CD4-positive, alpha-beta memory T cell (primary cell): ENCODE measurements at regions of chr15 and their contacts with region 1.

Region 1: DNA sequence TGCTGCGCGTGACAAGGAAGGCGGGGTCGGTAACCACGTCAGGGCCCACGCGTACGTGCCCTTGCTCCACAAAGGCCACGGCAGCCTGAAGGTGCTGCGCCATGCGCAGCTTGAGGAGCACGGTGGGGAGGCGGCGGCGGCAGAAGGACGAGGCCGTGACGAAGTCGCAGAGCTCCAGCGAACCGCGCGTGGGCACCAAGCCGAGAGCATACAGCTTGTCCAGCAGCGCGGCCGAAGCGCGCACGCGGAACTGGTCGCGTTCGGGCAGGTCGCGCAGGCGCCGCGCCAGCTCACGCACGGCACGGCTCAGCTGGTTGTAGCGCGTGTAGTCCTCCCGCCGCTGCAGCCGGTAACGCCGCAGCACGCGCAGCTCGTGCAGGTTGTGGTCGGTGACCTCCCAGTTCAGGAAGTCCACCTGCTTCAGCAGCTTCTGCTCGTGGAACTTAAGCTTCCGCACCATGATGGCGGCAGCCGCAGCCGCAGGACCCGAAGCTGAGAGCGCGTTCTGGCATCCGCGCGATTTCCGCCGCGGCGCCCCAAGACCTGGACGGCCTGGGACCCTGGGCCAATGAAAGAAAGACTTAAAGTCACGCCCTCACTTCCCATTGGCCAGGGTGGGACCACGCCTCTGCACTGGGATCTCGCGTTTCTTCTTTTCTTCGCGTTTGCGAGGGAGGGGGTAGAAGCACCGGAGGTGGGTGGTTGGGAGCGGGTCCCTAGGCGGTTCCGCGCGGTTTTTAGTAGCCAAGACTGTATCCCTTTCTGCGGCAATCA is at the start of gene IMP3:
- DNase-seq: peak; percentile 92 to 96 (median 94)
- H3K4me3 ChIP-seq: peak within 1 kb of the TSS; percentile 77 to 96
- H3K4me3 Mint-ChIP-seq: peak within 1 kb of the TSS; percentile 87 to 98 (median 94)
- H3K27ac ChIP-seq: peak within 1 kb of the TSS; percentile 81
- H3K27ac Mint-ChIP-seq: peak within 1 kb of the TSS; percentile 79 to 98 (median 96)
- H3K4me1 ChIP-seq: peaks cover 40% of the 10 kb centered on the region
- H3K4me1 Mint-ChIP-seq: peaks cover 30 to 61% (median 39%) of the 10 kb centered on the region in 4 donors
- H3K27me3 ChIP-seq: no peaks in the 10 kb centered on the region
- H3K27me3 Mint-ChIP-seq: no peaks in the 10 kb centered on the region
- total RNA-seq, gene IMP3: 85.5 to 96.9 TPM

Region 2: DNA sequence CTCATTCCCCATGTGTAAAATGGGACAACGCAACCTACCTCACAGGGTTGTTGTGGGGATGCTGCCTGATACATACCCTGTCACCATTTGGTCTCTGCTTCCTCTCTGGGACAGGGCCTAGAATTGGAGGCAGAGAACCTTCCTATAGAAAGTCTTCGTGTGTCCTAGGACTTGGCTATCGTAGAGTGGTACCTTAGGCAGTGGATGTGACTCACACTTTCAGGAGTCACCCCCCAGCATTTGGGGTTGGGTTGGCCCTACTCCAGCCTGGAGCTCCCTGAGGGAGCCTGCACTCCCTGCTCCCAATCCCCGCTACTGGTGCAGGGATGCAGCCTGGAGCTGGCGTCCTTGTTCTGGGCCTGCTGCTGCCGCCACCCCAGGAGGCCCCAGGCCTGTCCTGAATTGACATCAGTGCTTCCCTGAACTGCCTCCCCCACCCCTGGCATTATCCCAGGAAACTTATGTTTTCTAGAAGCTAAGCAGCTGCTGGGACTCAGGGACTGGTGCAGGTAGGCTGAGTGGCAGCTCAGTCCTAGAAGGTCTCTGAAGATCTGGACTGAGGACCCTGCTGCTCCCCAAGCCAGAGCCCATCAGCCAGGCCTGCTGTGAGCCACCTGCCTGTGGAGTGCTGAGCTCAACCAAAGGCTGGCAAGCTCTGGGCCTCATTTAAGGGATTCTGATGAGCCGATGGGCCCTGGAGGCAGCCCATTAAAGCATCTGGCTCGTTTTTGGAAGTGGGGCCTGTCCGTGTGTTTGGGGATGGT is 428.3 kb before region 1 on chr15:
- CTCF ChIA-PET with region 1: no interaction called
- POLR2A ChIA-PET with region 1: no interaction called
- intact Hi-C with region 1: no loop called
- DNase-seq: no peak
- H3K4me3 ChIP-seq: no peak overlapping the region
- H3K4me3 Mint-ChIP-seq: no peak overlapping the region
- H3K27ac ChIP-seq: no peak overlapping the region
- H3K27ac Mint-ChIP-seq: peak overlapping the region in 1 of 7 donors; percentile 17
- H3K4me1 ChIP-seq: peaks cover 11% of the 10 kb centered on the region
- H3K4me1 Mint-ChIP-seq: peaks cover 8 to 29% (median 16%) of the 10 kb centered on the region in 4 donors
- H3K27me3 ChIP-seq: no peaks in the 10 kb centered on the region
- H3K27me3 Mint-ChIP-seq: no peaks in the 10 kb centered on the region

Region 3: DNA sequence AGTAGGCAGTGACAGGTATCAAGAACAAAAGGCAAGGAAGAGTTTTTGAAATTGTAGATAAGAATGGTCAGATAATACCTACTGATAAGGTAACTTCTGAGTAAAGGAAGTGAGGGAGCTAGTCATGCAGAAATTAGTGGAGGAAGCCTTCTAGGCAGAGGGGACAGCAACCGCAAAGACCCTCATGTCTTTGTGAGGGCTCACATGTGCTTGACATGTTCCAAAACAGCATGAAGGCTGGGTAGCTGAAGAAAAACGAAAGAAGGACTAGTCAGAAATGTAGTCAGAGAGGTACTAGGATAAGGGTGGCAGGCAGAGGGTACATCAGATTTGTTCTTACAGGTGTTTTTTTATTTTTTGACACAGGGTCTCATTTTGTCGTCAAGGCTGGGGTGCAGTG is 193.7 kb before region 1 on chr15:
- CTCF ChIA-PET with region 1: interaction called, 8 read pairs
- POLR2A ChIA-PET with region 1: interaction called, 181 read pairs
- intact Hi-C with region 1: loop called (anchors 1 kb)
- DNase-seq: peak in 4 of 5 donors; percentile 15 to 48 (median 22)
- H3K4me3 ChIP-seq: no peak overlapping the region
- H3K4me3 Mint-ChIP-seq: peak overlapping the region; percentile 10 to 83 (median 58)
- H3K27ac ChIP-seq: no peak overlapping the region
- H3K27ac Mint-ChIP-seq: peak overlapping the region; percentile 1 to 76 (median 46)
- H3K4me1 ChIP-seq: peaks cover 78% of the 10 kb centered on the region
- H3K4me1 Mint-ChIP-seq: peaks cover 36 to 67% (median 56%) of the 10 kb centered on the region in 4 donors
- H3K27me3 ChIP-seq: no peaks in the 10 kb centered on the region
- H3K27me3 Mint-ChIP-seq: no peaks in the 10 kb centered on the region

Region 4: GRCh38 chr15:75508840-75509532 is 130.9 kb before region 1 on chr15:
- CTCF ChIA-PET with region 1: interaction called, 41 read pairs
- POLR2A ChIA-PET with region 1: interaction called, 20 read pairs
- intact Hi-C with region 1: loop called (anchors 1 kb)
- DNase-seq: peak in 4 of 5 donors; percentile 40 to 49 (median 44)
- H3K4me3 ChIP-seq: no peak overlapping the region
- H3K4me3 Mint-ChIP-seq: no peak overlapping the region
- H3K27ac ChIP-seq: no peak overlapping the region
- H3K27ac Mint-ChIP-seq: peak overlapping the region in 2 of 7 donors; percentile 50 to 78
- H3K4me1 ChIP-seq: no peaks in the 10 kb centered on the region
- H3K4me1 Mint-ChIP-seq: peaks cover 0 to 3% (median 0%) of the 10 kb centered on the region in 4 donors
- H3K27me3 ChIP-seq: no peaks in the 10 kb centered on the region
- H3K27me3 Mint-ChIP-seq: no peaks in the 10 kb centered on the region

Region 5: DNA sequence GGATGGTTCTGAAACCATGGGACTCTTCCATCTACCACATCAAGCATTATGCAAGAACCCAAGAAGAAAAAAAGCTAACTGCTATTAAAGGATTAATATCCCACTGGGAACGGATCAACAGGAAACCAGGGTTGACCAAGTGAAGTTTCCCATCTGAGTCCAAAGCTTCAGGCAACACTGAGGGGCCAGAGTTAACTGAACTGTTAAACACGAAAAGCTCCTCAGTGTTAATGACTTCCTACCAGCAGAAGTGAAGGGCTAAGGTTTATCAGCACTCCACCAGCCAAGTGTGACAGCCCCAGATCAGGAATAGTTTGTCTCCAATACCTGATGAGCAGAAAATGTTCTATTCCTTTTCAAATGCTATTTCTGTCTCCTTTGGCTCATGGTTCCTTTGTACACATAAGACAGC is 97.5 kb before region 1 on chr15:
- CTCF ChIA-PET with region 1: no interaction called
- POLR2A ChIA-PET with region 1: no interaction called
- intact Hi-C with region 1: no loop called
- DNase-seq: no peak
- H3K4me3 ChIP-seq: no peak overlapping the region
- H3K4me3 Mint-ChIP-seq: no peak overlapping the region
- H3K27ac ChIP-seq: no peak overlapping the region
- H3K27ac Mint-ChIP-seq: peak overlapping the region in 3 of 7 donors; percentile 5 to 13 (median 13)
- H3K4me1 ChIP-seq: peaks cover 14% of the 10 kb centered on the region
- H3K4me1 Mint-ChIP-seq: peaks cover 17 to 44% (median 28%) of the 10 kb centered on the region in 4 donors
- H3K27me3 ChIP-seq: no peaks in the 10 kb centered on the region
- H3K27me3 Mint-ChIP-seq: no peaks in the 10 kb centered on the region

Region 6: DNA sequence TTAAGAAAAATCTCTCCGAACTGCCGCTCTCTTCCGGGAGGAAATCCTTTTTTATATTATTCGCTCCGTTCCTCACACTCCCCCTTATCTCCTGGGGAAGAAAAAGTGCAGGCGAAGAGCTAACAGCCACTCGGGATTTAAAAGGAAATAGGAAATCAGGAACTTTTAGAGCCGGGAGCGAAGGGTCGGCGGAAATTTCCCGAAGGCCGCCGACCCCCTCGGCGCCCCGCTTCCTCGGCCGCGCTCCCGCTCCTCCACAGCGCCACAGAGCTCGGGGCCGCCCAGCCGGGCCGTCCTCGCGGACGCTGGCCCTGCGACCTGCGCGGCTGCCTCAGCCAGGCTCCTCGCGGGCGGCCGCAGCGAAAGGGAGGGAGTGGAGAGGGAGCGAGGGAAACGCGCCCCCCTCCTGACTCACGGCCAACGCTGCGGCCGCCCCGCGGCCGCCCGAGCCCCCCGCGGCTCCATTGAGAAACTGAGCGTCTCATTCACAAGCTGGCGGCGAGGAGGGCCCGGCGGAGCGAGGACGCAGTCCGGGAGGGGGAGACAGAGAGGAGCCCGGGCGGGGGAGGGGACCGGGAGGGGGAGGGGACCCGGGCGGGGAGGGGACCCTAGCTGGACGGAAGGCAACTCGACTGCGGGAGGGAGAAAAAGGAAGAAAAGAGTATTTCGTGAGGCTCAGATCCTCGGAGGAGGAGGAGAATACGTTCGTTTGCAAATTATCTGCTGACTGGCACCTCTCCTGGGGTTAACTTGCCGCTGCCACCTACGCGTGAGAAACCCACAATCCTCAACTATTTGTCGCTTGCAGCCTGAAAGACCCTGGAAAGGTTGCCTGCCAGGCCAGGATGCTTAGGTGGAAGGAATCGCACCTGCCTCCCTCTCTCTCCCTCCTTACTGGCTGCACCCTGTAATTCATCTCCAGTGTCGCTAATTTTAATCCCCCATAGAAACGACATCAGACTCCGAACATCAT is 60.7 kb before region 1 on chr15 and contains the start of gene PTPN9:
- CTCF ChIA-PET with region 1: interaction called, 9 read pairs
- POLR2A ChIA-PET with region 1: interaction called, 56 read pairs
- intact Hi-C with region 1: loop called (anchors 1 kb)
- DNase-seq: peak; percentile 52 to 73 (median 63)
- H3K4me3 ChIP-seq: peak within 1 kb of the TSS; percentile 61 to 74
- H3K4me3 Mint-ChIP-seq: peak within 1 kb of the TSS; percentile 93 to 97 (median 94)
- H3K27ac ChIP-seq: peak within 1 kb of the TSS; percentile 77
- H3K27ac Mint-ChIP-seq: peak within 1 kb of the TSS; percentile 90 to 95 (median 94)
- H3K4me1 ChIP-seq: peaks cover 22% of the 10 kb centered on the region
- H3K4me1 Mint-ChIP-seq: peaks cover 18 to 26% (median 21%) of the 10 kb centered on the region in 4 donors
- H3K27me3 ChIP-seq: no peaks in the 10 kb centered on the region
- H3K27me3 Mint-ChIP-seq: no peaks in the 10 kb centered on the region
- total RNA-seq, gene PTPN9: 15.9 to 16.6 TPM

Region 7: DNA sequence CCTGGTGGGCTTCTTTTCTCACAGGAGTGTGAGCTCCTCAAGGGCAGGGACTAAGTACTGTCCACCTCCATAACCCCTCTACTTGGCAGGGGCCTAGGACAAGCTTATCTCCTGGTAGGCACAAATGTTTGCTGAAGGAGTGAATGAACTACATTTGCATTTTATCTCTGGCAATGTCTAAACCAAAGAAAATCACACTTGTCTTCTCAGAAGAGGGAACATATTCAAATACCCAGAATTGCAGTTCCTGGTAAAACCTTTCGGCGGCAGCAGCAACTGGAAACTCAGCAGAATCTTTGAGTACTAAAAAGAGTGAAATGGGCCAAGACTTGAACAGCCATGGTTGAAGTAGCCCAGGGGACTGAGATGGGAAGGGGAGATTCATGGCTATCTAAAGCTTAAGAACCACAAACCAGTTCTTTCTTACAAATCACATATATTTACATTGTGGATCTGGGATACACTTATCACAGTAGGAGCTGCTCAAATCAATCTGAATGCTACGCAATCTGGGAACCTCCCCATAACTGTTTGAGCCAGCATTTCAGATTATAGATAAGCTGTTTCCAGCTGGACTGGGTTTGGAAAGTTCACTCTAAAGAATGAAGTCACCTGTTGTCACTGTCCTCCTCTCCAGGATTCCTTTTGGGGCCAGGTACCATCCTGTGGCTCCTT is 42.1 kb before region 1 on chr15:
- CTCF ChIA-PET with region 1: interaction called, 31 read pairs
- POLR2A ChIA-PET with region 1: interaction called, 28 read pairs
- intact Hi-C with region 1: loop called (anchors 2 kb)
- DNase-seq: peak; percentile 19 to 50 (median 33)
- H3K4me3 ChIP-seq: no peak overlapping the region
- H3K4me3 Mint-ChIP-seq: peak overlapping the region in 6 of 8 donors; percentile 1 to 68 (median 36)
- H3K27ac ChIP-seq: no peak overlapping the region
- H3K27ac Mint-ChIP-seq: peak overlapping the region in 6 of 7 donors; percentile 15 to 93 (median 59)
- H3K4me1 ChIP-seq: peaks cover 25% of the 10 kb centered on the region
- H3K4me1 Mint-ChIP-seq: peaks cover 16 to 26% (median 21%) of the 10 kb centered on the region in 4 donors
- H3K27me3 ChIP-seq: no peaks in the 10 kb centered on the region
- H3K27me3 Mint-ChIP-seq: no peaks in the 10 kb centered on the region

Region 8: GRCh38 chr15:75606711-75607699 is 32.9 kb before region 1 on chr15:
- CTCF ChIA-PET with region 1: interaction called, 9 read pairs
- POLR2A ChIA-PET with region 1: interaction called, 56 read pairs
- intact Hi-C with region 1: loop called (anchors 2 kb)
- DNase-seq: peak; percentile 43 to 57 (median 52)
- H3K4me3 ChIP-seq: peak overlapping the region; percentile 5 to 40
- H3K4me3 Mint-ChIP-seq: peak overlapping the region; percentile 71 to 82 (median 78)
- H3K27ac ChIP-seq: peak overlapping the region; percentile 39
- H3K27ac Mint-ChIP-seq: peak overlapping the region; percentile 78 to 94 (median 91)
- H3K4me1 ChIP-seq: peaks cover 47% of the 10 kb centered on the region
- H3K4me1 Mint-ChIP-seq: peaks cover 34 to 56% (median 46%) of the 10 kb centered on the region in 4 donors
- H3K27me3 ChIP-seq: no peaks in the 10 kb centered on the region
- H3K27me3 Mint-ChIP-seq: no peaks in the 10 kb centered on the region

Region 9: GRCh38 chr15:75625542-75626347 is 14.2 kb before region 1 on chr15 and contains the start of gene SNUPN:
- CTCF ChIA-PET with region 1: interaction called, 35 read pairs
- POLR2A ChIA-PET with region 1: interaction called, 209 read pairs
- intact Hi-C with region 1: loop called (anchors 1 kb)
- DNase-seq: peak; percentile 88 to 94 (median 89)
- H3K4me3 ChIP-seq: peak within 1 kb of the TSS; percentile 94 to 99
- H3K4me3 Mint-ChIP-seq: peak within 1 kb of the TSS; percentile 91 to 97 (median 94)
- H3K27ac ChIP-seq: peak within 1 kb of the TSS; percentile 97
- H3K27ac Mint-ChIP-seq: peak within 1 kb of the TSS; percentile 96 to 99 (median 98)
- H3K4me1 ChIP-seq: peaks cover 22% of the 10 kb centered on the region
- H3K4me1 Mint-ChIP-seq: peaks cover 14 to 35% (median 24%) of the 10 kb centered on the region in 4 donors
- H3K27me3 ChIP-seq: no peaks in the 10 kb centered on the region
- H3K27me3 Mint-ChIP-seq: no peaks in the 10 kb centered on the region
- total RNA-seq, gene SNUPN: 21.0 to 23.5 TPM

Region 10: DNA sequence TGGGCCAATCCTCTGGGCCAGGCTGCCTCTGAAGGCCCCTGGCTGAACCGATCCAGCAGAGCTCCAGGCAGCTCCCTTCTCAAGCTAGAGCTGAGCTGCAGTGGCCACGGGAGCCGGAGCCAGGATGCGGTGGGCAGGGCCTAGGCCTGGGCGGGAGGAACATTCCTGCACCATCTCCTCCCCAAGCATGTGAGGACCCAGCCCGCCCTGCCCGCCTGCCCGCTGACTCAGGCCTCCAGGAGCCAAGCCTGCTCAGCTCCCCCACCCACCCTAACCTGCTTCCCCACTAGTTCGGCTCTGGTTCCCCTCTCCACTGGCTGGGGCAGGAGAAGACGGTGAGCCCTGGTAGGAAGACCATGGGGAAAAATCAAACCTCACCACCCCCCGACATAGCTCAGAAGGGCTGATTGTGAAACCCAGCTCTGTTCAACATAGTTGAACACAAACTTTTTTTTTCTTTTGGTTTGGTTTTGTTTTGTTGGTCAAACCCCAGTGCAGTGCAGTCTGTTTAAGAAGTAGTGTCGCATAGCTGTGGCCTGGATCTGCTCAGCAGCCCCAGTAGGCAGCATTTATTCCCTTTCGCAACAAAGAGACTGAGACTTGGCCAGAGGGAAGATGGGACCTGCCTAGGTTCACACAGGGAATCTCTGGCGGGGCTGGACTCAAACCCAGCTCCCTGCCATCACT is 21.3 kb after region 1 on chr15:
- CTCF ChIA-PET with region 1: no interaction called
- POLR2A ChIA-PET with region 1: no interaction called
- intact Hi-C with region 1: no loop called
- DNase-seq: no peak
- H3K4me3 ChIP-seq: no peak overlapping the region
- H3K4me3 Mint-ChIP-seq: no peak overlapping the region
- H3K27ac ChIP-seq: no peak overlapping the region
- H3K27ac Mint-ChIP-seq: no peak overlapping the region
- H3K4me1 ChIP-seq: no peaks in the 10 kb centered on the region
- H3K4me1 Mint-ChIP-seq: peaks cover 0 to 2% (median under 1%) of the 10 kb centered on the region in 4 donors
- H3K27me3 ChIP-seq: no peaks in the 10 kb centered on the region
- H3K27me3 Mint-ChIP-seq: no peaks in the 10 kb centered on the region

Region 11: DNA sequence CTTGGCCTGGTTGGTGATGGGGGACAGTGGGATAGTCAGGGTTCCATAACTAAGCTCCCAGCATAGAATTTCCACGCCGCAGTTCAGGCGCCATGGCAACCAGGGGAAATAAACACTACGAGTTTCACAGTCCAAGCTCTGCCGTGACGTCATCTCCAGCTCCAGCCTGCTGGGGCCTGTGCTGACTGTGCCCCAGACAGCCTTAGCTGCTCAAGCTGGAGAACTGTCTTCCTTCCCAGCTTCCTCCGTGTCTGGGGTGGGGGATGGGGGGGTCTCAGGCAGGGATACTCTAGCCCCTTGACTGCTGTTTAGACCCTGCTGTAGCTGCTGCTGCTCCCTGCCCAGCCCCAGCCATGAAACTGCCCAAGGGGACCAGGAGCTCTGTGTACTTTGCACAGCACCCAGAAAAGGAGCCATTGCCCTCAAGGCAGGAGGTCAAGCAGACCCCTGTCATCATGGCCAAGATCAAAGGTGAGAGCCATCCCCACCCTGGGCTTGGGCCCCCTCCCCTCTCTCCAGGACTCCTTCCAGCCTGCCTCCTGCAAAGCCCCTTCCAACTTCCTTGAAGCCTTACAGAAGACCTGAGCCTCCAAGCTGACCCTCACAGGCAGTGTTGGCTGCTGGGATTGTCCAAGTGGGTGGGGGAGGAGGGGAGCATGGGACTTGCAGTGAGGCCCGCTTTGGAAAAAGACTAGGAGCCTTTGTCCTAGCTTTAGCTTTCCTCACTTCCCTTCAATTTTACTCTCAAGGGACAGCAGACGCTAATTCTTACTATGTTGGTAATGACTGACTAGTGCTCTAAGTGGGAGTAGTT is 84.2 kb after region 1 on chr15:
- CTCF ChIA-PET with region 1: no interaction called
- POLR2A ChIA-PET with region 1: no interaction called
- intact Hi-C with region 1: no loop called
- DNase-seq: peak; percentile 16 to 69 (median 25)
- H3K4me3 ChIP-seq: no peak overlapping the region
- H3K4me3 Mint-ChIP-seq: no peak overlapping the region
- H3K27ac ChIP-seq: no peak overlapping the region
- H3K27ac Mint-ChIP-seq: peak overlapping the region in 4 of 7 donors; percentile 16 to 83 (median 56)
- H3K4me1 ChIP-seq: no peaks in the 10 kb centered on the region
- H3K4me1 Mint-ChIP-seq: peaks cover 0 to 10% (median 1%) of the 10 kb centered on the region in 4 donors
- H3K27me3 ChIP-seq: no peaks in the 10 kb centered on the region
- H3K27me3 Mint-ChIP-seq: peaks cover 0 to 9% of the 10 kb centered on the region in 2 donors